ENCODE measurements at regions of chr9 and their contacts with region 1.

Region 1: DNA sequence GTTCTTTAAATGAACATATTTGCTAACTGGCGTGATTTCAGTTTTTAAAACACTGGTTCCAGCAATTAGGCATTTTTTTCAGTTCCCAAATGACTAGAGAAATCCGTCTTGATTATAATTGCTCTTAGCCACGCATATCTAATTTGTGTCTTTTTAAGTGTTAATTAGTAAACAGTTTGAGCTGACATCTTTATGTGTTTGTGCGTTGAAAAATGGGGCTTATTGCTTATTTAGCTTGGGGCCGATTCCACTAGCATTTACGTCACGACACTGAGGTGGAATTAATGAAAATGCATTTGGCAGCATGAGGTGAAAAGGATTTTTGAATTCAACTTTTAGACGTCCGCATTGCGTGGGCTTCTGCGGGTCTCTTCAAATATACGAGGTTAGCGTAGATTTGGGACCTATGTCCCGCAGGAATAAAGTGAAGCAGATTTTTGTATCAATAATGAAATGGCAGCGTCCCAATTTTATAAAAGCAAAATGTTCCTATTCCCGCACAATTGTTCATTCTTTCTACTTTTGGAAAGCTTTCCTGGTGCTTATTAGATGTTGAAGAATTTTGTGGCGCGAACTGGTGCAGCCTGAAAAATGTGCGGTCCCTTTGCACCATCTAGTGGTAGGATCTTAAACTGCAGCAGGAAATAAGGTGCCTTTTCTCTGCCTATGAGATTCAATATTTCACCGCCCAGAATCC is 122.7 kb upstream of the LMX1B start:
- DNase-seq: no peak
- ATAC-seq: peak; percentile 73
- H3K4me3 ChIP-seq: no peak overlapping the region
- H3K27ac ChIP-seq: no peak overlapping the region
- H3K4me1 ChIP-seq: no peaks in the 10 kb centered on the region
- H3K27me3 ChIP-seq: peaks cover 0 to 2% of the 10 kb centered on the region in 2 experiments; a peak in 3 of 4 replicates
- CTCF ChIP-seq: peak; percentile 81 to 91 (median 85)
- EP300 ChIP-seq: no peak
- POLR2A ChIP-seq: no peak
- RAD21 ChIP-seq: peak; percentile 96

Region 2: GRCh38 chr9:126146254-126147145 is 344.5 kb before region 1 on chr9:
- CTCF ChIA-PET with region 1: no interaction called
- POLR2A ChIA-PET with region 1: no interaction called
- RAD21 ChIA-PET with region 1: no interaction called
- SMC1A ChIA-PET with region 1: no interaction called
- in situ Hi-C with region 1: loop called (anchors 10 kb)
- intact Hi-C with region 1: loop called (anchors 10 kb)
- DNase-seq: peak; percentile 15
- ATAC-seq: peak; percentile 90
- H3K4me3 ChIP-seq: no peak overlapping the region
- H3K27ac ChIP-seq: no peak overlapping the region
- H3K4me1 ChIP-seq: no peaks in the 10 kb centered on the region
- H3K27me3 ChIP-seq: no peaks in the 10 kb centered on the region; a peak in 1 of 4 replicates
- CTCF ChIP-seq: peak; percentile 48 to 55 (median 48)
- EP300 ChIP-seq: no peak
- POLR2A ChIP-seq: no peak
- RAD21 ChIP-seq: peak; percentile 35; the same call in 1 of the 2 replicates

Region 3: GRCh38 chr9:126301985-126302603 is 188.9 kb before region 1 on chr9:
- CTCF ChIA-PET with region 1: interaction called, 15 read pairs
- POLR2A ChIA-PET with region 1: interaction called, 3 read pairs
- RAD21 ChIA-PET with region 1: no interaction called
- SMC1A ChIA-PET with region 1: interaction called, 6 read pairs
- in situ Hi-C with region 1: loop called (anchors 5 kb)
- intact Hi-C with region 1: loop called (anchors 1 kb)
- DNase-seq: no peak
- ATAC-seq: peak; percentile 73
- H3K4me3 ChIP-seq: no peak overlapping the region
- H3K27ac ChIP-seq: no peak overlapping the region
- H3K4me1 ChIP-seq: no peaks in the 10 kb centered on the region
- H3K27me3 ChIP-seq: no peaks in the 10 kb centered on the region
- CTCF ChIP-seq: peak; percentile 44 to 55 (median 50); a peak in 5 of 6 replicates
- EP300 ChIP-seq: no peak
- POLR2A ChIP-seq: no peak
- RAD21 ChIP-seq: peak; percentile 45; the same call in 1 of the 2 replicates

Region 4: GRCh38 chr9:126398403-126399058 is 92.5 kb before region 1 on chr9:
- CTCF ChIA-PET with region 1: interaction called, 12 read pairs
- POLR2A ChIA-PET with region 1: no interaction called
- RAD21 ChIA-PET with region 1: interaction called, 9 read pairs
- SMC1A ChIA-PET with region 1: interaction called, 15 read pairs
- in situ Hi-C with region 1: no loop called
- intact Hi-C with region 1: loop called (anchors 5 kb)
- DNase-seq: no peak
- ATAC-seq: peak; percentile 75
- H3K4me3 ChIP-seq: no peak overlapping the region
- H3K27ac ChIP-seq: no peak overlapping the region
- H3K4me1 ChIP-seq: peaks cover 5% of the 10 kb centered on the region
- H3K27me3 ChIP-seq: peaks cover 1 to 13% of the 10 kb centered on the region in 2 experiments
- CTCF ChIP-seq: peak; percentile 96 to 97 (median 96)
- EP300 ChIP-seq: no peak
- POLR2A ChIP-seq: no peak
- RAD21 ChIP-seq: peak; percentile 81

Measured in GM12878 (cell line).